Transverse colon (tissue), 4 donors: ENCODE measurements at regions of chr18 and their contacts with region 1.

Region 1: DNA sequence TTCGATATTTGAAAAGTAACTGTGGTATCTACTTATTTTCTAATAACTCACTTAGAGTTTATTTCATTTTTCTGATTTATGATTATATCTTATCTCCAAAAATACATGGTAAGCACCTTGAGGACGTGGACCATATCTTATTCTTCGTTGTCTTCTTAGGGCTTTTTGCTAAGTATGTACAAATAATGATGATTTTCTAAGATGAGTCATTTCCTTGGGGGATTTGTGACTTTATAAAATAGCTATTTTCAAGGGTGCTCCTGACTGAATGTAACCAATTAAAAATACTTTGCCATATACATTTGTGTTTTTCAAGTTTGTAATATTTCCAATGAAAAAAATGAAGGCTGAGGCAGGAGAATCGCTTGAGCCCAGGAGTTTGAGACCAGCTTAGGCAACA is 56.3 kb downstream of the GREB1L start:
- DNase-seq: no peak
- H3K4me3 ChIP-seq: no peak overlapping the region
- H3K27ac ChIP-seq: no peak overlapping the region
- H3K4me1 ChIP-seq: no peaks in the 10 kb centered on the region
- H3K27me3 ChIP-seq: no peaks in the 10 kb centered on the region
- CTCF ChIP-seq: no peak
- EP300 ChIP-seq: no peak
- POLR2A ChIP-seq: no peak

Region 2: DNA sequence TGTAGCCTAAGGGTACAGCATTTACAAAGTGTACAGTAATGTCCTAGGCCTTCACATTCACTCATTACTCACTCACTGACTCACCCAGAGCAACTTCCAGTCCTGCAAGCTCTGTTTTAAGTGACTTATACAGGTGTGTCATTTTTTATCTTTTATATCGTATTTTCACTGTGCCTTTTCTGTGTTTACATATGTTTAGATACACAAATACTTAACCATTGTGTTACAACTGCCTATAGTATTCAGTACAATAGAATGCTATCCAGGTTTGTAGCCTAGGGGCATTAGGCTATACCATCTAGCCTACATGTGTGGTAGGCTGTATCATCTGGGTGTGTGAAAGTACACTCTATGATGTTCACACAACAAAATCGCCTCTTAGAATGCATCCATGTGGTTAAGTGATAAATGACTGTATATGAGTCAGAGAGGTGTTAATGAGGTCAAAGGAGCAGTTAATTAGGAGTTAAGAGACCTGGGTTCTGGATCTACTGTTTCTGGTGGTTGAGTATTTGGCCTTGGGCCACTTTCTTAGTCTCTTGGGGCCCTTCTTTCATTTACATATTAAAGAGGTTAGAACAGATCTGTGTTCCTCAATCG is 92.8 kb after region 1 on chr18:
- in situ Hi-C with region 1: loop called in 1 of 4 experiments (anchors 25 kb)
- intact Hi-C with region 1: no loop called
- DNase-seq: no peak
- H3K4me3 ChIP-seq: no peak overlapping the region
- H3K27ac ChIP-seq: no peak overlapping the region
- H3K4me1 ChIP-seq: peaks cover 0 to 2% (median 0%) of the 10 kb centered on the region in 4 donors
- H3K27me3 ChIP-seq: no peaks in the 10 kb centered on the region
- CTCF ChIP-seq: no peak
- EP300 ChIP-seq: no peak
- POLR2A ChIP-seq: no peak